CD4-positive, alpha-beta T cell (primary cell): ENCODE measurements at regions of chr2 and their contacts with region 1.

Region 1: GRCh38 chr2:95076784-95077529 is 44.7 kb downstream of the MRPS5 start:
- DNase-seq: peak; percentile 85 to 96 (median 93)
- ATAC-seq: peak; percentile 75
- H3K4me3 ChIP-seq: peak overlapping the region; percentile 52
- H3K4me3 Mint-ChIP-seq: peak overlapping the region; percentile 90
- H3K27ac ChIP-seq: peak overlapping the region; percentile 37 to 92
- H3K27ac Mint-ChIP-seq: peak overlapping the region; percentile 93
- H3K4me1 ChIP-seq: peaks cover 75% of the 10 kb centered on the region
- H3K4me1 Mint-ChIP-seq: peaks cover 80% of the 10 kb centered on the region
- H3K27me3 ChIP-seq: no peaks in the 10 kb centered on the region
- H3K27me3 Mint-ChIP-seq: no peaks in the 10 kb centered on the region
- CTCF ChIP-seq: peak; percentile 95

Region 2: GRCh38 chr2:95043300-95044093 is 33.5 kb before region 1 on chr2:
- CTCF ChIA-PET with region 1: interaction called, 5 read pairs
- POLR2A ChIA-PET with region 1: interaction called, 45 read pairs
- intact Hi-C with region 1: loop called in 1 of 2 experiments (anchors 5 kb)
- DNase-seq: peak in 2 of 14 experiments; percentile 23 to 32
- ATAC-seq: peak; percentile 51
- H3K4me3 ChIP-seq: no peak overlapping the region
- H3K4me3 Mint-ChIP-seq: no peak overlapping the region
- H3K27ac ChIP-seq: peak overlapping the region in 1 of 2 donors; percentile 14
- H3K27ac Mint-ChIP-seq: peak overlapping the region; percentile 71
- H3K4me1 ChIP-seq: peaks cover 63% of the 10 kb centered on the region
- H3K4me1 Mint-ChIP-seq: peaks cover 84% of the 10 kb centered on the region
- H3K27me3 ChIP-seq: no peaks in the 10 kb centered on the region
- H3K27me3 Mint-ChIP-seq: no peaks in the 10 kb centered on the region
- CTCF ChIP-seq: no peak

Region 3: GRCh38 chr2:95062242-95063085 is 14.5 kb before region 1 on chr2:
- CTCF ChIA-PET with region 1: interaction called, 12 read pairs
- POLR2A ChIA-PET with region 1: interaction called, 295 read pairs
- intact Hi-C with region 1: loop called in 1 of 2 experiments (anchors 2 kb)
- DNase-seq: peak in 2 of 14 experiments; percentile 31 to 33
- ATAC-seq: peak; percentile 47
- H3K4me3 ChIP-seq: no peak overlapping the region
- H3K4me3 Mint-ChIP-seq: peak overlapping the region; percentile 56
- H3K27ac ChIP-seq: no peak overlapping the region
- H3K27ac Mint-ChIP-seq: peak overlapping the region; percentile 80
- H3K4me1 ChIP-seq: peaks cover 36% of the 10 kb centered on the region
- H3K4me1 Mint-ChIP-seq: peaks cover 42% of the 10 kb centered on the region
- H3K27me3 ChIP-seq: no peaks in the 10 kb centered on the region
- H3K27me3 Mint-ChIP-seq: no peaks in the 10 kb centered on the region
- CTCF ChIP-seq: no peak

Region 4: DNA sequence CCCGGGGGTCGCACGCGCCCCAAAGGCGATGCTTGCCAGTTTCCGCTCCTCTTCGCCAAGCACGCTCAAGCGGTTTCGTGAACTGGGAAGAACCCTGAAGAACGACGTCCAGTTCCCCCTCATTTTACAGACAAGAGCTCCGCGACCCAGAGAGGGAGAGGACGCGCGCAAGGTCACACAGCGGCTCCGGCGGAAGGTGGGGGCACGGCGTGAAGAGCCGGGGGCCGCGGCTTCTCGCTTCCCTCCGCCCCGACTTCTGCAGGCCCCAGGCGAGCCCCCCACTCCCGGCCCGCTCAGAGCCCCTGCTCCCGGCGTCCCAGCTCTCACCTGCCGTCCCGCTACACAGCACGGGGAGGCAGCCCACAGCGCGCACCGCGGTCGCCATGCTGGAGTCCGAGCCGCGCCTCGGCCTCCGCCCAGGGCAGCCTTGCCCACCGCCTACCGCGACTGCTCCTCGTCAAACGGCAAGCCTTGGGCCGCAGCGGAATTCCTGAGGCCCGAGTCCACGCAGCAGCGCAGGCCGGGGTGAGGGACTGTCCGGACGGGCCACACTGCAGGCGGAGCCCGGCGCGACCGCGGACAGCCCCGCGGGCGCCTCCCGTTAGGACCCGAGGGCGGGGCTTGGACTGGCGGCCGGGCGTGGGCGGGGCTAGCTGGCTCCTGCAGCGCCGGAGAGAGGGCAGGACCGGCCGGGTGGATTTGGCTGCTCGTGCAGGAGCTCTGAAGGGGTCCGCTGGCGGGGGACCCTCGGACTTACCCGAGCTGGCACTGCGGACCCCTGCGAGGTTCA is 44.6 kb after region 1 on chr2 and contains the start of gene MRPS5:
- CTCF ChIA-PET with region 1: interaction called, 36 read pairs
- POLR2A ChIA-PET with region 1: interaction called, 12 read pairs
- intact Hi-C with region 1: no loop called
- DNase-seq: peak; percentile 68 to 91 (median 82)
- ATAC-seq: peak; percentile 89
- H3K4me3 ChIP-seq: peak within 1 kb of the TSS; percentile 81
- H3K4me3 Mint-ChIP-seq: peak within 1 kb of the TSS; percentile 95
- H3K27ac ChIP-seq: peak within 1 kb of the TSS; percentile 59 to 74
- H3K27ac Mint-ChIP-seq: peak within 1 kb of the TSS; percentile 94
- H3K4me1 ChIP-seq: peaks cover 31% of the 10 kb centered on the region
- H3K4me1 Mint-ChIP-seq: peaks cover 52% of the 10 kb centered on the region
- H3K27me3 ChIP-seq: no peaks in the 10 kb centered on the region
- H3K27me3 Mint-ChIP-seq: no peaks in the 10 kb centered on the region
- CTCF ChIP-seq: no peak
- total RNA-seq, gene MRPS5: 15.3 to 16.3 TPM

Region 5: GRCh38 chr2:95165129-95166064 is 88.4 kb after region 1 on chr2 and contains the start of gene ZNF2:
- CTCF ChIA-PET with region 1: interaction called, 4 read pairs
- POLR2A ChIA-PET with region 1: interaction called, 10 read pairs
- intact Hi-C with region 1: no loop called
- DNase-seq: peak; percentile 91 to 99 (median 96)
- ATAC-seq: peak; percentile 92
- H3K4me3 ChIP-seq: peak within 1 kb of the TSS; percentile 97
- H3K4me3 Mint-ChIP-seq: peak within 1 kb of the TSS; percentile 97
- H3K27ac ChIP-seq: peak within 1 kb of the TSS; percentile 86 to 92
- H3K27ac Mint-ChIP-seq: peak within 1 kb of the TSS; percentile 96
- H3K4me1 ChIP-seq: peaks cover 15% of the 10 kb centered on the region
- H3K4me1 Mint-ChIP-seq: peaks cover 36% of the 10 kb centered on the region
- H3K27me3 ChIP-seq: no peaks in the 10 kb centered on the region
- H3K27me3 Mint-ChIP-seq: no peaks in the 10 kb centered on the region
- CTCF ChIP-seq: no peak
- total RNA-seq, gene ZNF2: 0.53 TPM in 1 of 2 experiments, not detected in the other